ENCODE measurements at regions of chrX and their contacts with region 1.

Region 1: GRCh38 chrX:13473442-13474163 is 95.8 kb upstream of the EGFL6 start:
- DNase-seq: no peak
- H3K4me3 Mint-ChIP-seq: peak overlapping the region; percentile 73
- H3K27ac Mint-ChIP-seq: peak overlapping the region; percentile 92
- H3K4me1 Mint-ChIP-seq: peaks cover 44% of the 10 kb centered on the region
- H3K27me3 Mint-ChIP-seq: no peaks in the 10 kb centered on the region

Region 2: DNA sequence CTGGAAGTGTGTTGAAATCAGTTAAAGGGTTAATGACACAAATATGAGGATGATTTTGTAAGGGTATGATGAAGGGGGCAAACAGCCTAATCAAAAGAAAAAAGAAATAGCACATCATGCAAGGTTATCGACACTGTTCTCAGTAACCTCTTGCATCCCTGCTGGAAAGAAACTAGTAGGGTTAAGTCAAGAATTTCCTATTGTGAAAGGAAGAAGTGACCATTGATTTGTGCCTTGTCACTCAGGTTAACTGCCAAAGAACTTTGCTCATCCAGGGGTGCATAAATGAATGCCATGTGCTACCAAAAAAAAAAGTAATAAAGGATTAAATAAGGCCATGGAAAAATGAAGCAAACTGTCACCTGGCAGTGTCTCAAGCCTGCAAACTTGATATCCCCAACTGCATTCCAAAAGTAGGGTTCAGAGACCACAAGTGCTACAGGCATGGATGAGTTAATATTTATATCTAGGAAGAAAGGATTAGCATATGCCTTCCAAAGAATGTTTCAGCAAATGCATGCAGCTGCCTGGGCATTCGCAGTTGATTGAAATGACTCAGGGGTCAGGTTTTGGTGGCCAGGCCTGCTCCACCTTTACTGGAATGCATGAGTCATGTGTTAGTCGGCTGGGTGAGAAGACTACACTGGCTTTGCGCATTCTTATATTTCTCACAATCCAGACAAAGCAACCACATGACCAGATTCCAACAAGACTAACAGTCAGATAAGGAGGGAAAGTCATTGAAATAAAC is 75.4 kb before region 1 on chrX:
- intact Hi-C with region 1: loop called (anchors 5 kb)
- DNase-seq: no peak
- H3K4me3 Mint-ChIP-seq: no peak overlapping the region
- H3K27ac Mint-ChIP-seq: peak overlapping the region; percentile 36
- H3K4me1 Mint-ChIP-seq: peaks cover 14% of the 10 kb centered on the region
- H3K27me3 Mint-ChIP-seq: no peaks in the 10 kb centered on the region

Region 3: DNA sequence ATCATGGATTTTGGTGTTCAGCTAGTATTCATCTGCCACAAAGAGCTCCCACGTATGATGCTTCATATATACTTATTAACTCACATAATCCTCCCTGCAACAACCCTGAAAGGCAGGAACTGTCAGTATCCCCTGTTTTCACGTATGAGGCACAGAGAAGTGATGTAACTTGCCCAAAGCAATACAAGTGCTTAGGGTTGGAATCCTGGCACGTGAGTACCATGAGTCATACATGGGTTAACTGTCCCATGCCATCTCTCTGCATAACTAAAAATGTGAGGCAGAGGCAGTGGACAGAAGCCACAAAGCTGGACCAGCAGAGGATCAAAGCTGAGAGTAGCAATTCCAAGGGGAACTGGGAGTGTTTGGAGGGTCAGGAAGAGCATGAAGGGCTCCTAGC is 60.1 kb after region 1 on chrX:
- intact Hi-C with region 1: no loop called
- DNase-seq: no peak
- H3K4me3 Mint-ChIP-seq: no peak overlapping the region
- H3K27ac Mint-ChIP-seq: no peak overlapping the region
- H3K4me1 Mint-ChIP-seq: no peaks in the 10 kb centered on the region
- H3K27me3 Mint-ChIP-seq: no peaks in the 10 kb centered on the region

Region 4: GRCh38 chrX:14029425-14030173 is 556.0 kb after region 1 on chrX and contains the start of gene GEMIN8:
- intact Hi-C with region 1: no loop called
- DNase-seq: peak; percentile 81
- H3K4me3 Mint-ChIP-seq: peak within 1 kb of the TSS; percentile 99
- H3K27ac Mint-ChIP-seq: peak within 1 kb of the TSS; percentile 100
- H3K4me1 Mint-ChIP-seq: peaks cover 37% of the 10 kb centered on the region
- H3K27me3 Mint-ChIP-seq: no peaks in the 10 kb centered on the region
- total RNA-seq, gene GEMIN8: 15.6 and 17.7 TPM in 2 replicates

Measured in activated T-helper 1 cell treated with anti-CD3 and anti-CD28 coated beads, Interleukin-12 subunit alpha, Interleukin-12 subunit beta, Interleukin-2, Interleukin-4 antibody, amounts not matched to agents 30 ng/mL and 10 ng/mL and 1 ng/mL, durations not matched to agents 14 hours and 24 hours and 36 hours (primary cell).